Natural killer cell (primary cell): ENCODE measurements at regions of chr12 and their contacts with region 1.

Region 1: GRCh38 chr12:71663561-71664294 is at the start of gene ZFC3H1:
- DNase-seq: peak; percentile 86 to 98
- ATAC-seq: peak; percentile 72 to 89 (median 77)
- H3K4me3 ChIP-seq: peak within 1 kb of the TSS; percentile 92
- H3K4me3 Mint-ChIP-seq: peak within 1 kb of the TSS; percentile 100
- H3K27ac ChIP-seq: peak within 1 kb of the TSS; percentile 98
- H3K27ac Mint-ChIP-seq: peak within 1 kb of the TSS; percentile 100
- H3K4me1 ChIP-seq: peaks cover 10% of the 10 kb centered on the region
- H3K4me1 Mint-ChIP-seq: peaks cover 53 to 56% of the 10 kb centered on the region in 2 donors
- H3K27me3 ChIP-seq: no peaks in the 10 kb centered on the region
- H3K27me3 Mint-ChIP-seq: peaks cover 0 to 2% of the 10 kb centered on the region in 2 donors
- CTCF ChIP-seq: no peak
- total RNA-seq, gene ZFC3H1: 158 to 164 (median 164) TPM

Region 2: GRCh38 chr12:71685914-71686665 is 22.4 kb after region 1 on chr12 and contains the start of gene TMEM19:
- intact Hi-C with region 1: loop called (anchors 1 kb)
- DNase-seq: peak; percentile 78 to 91
- ATAC-seq: peak; percentile 89 to 94 (median 91)
- H3K4me3 ChIP-seq: peak within 1 kb of the TSS; percentile 90
- H3K4me3 Mint-ChIP-seq: peak within 1 kb of the TSS; percentile 97
- H3K27ac ChIP-seq: peak within 1 kb of the TSS; percentile 81
- H3K27ac Mint-ChIP-seq: peak within 1 kb of the TSS; percentile 94 to 96
- H3K4me1 ChIP-seq: peaks cover 17% of the 10 kb centered on the region
- H3K4me1 Mint-ChIP-seq: peaks cover 22 to 33% of the 10 kb centered on the region in 2 donors
- H3K27me3 ChIP-seq: no peaks in the 10 kb centered on the region
- H3K27me3 Mint-ChIP-seq: peaks cover 0 to 3% of the 10 kb centered on the region in 2 donors
- CTCF ChIP-seq: no peak
- total RNA-seq, gene TMEM19: 13.8 to 24.6 (median 18.9) TPM

Region 3: DNA sequence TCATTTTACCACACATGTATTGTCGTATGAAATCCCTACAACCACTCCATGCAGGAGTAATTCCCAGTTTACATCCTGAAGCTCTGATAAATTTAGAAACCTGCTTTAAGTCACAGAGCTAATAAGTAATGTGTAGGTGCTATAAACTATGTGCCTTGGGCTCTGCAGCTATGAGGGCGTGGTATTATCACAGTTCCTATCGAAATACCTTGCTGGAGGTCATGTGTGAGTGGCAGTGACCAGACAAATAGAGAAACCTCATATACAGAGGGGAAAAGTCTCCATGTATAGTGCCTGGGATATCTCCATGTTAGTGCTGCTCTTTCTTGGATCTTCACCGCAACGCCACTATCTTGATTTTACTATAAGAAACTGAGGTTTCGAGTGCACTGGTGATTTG is 174.9 kb after region 1 on chr12:
- intact Hi-C with region 1: loop called (anchors 10 kb)
- DNase-seq: peak in 1 of 2 donors; percentile 14
- ATAC-seq: no peak
- H3K4me3 ChIP-seq: no peak overlapping the region
- H3K4me3 Mint-ChIP-seq: peak overlapping the region; percentile 96
- H3K27ac ChIP-seq: peak overlapping the region; percentile 99
- H3K27ac Mint-ChIP-seq: peak overlapping the region; percentile 97
- H3K4me1 ChIP-seq: peaks cover 13% of the 10 kb centered on the region
- H3K4me1 Mint-ChIP-seq: peaks cover 35 to 40% of the 10 kb centered on the region in 2 donors
- H3K27me3 ChIP-seq: peaks cover 5% of the 10 kb centered on the region
- H3K27me3 Mint-ChIP-seq: peaks cover 9 to 20% of the 10 kb centered on the region in 2 donors
- CTCF ChIP-seq: no peak